T-cell (primary cell): ENCODE measurements at regions of chr3 and their contacts with region 1.

Region 1: DNA sequence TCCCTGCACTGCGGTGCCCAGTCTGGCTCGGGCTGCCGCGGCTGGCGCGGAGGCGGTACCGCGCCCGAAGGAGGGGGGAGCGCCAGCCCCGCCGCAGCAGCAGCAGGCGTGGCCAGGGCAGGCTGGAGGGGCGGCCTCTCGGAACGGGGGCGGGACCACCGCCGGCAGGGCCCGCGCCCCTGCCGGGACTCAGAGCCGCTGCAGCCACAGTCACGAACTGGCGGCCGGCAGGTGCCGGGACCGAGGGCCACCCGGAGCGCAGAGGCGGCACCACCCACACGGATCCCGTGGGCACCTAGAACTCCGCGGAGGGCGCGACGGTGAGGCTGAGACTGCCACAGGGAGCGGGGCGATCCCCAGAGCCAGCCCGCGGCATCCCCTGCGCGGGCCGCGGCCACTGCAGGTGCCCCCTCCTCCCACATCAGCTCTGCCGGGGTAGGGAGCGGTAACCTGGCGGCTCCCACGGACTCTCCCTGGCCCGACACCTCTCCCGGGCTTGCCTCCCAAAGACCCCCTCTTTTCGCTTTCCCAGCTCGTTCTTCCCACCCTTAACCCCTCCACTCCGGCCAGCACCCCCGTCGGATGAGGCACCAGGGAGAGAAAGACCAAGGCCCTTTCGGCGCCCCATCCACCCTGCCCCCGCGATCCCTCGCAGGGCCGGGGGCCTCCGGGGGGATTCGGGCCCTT is at the start of gene VWA5B2:
- DNase-seq: peak; percentile 36 to 85 (median 67)
- ATAC-seq: peak; percentile 96 to 98 (median 97)
- H3K4me3 ChIP-seq: peak within 1 kb of the TSS; percentile 50 to 77
- H3K4me3 Mint-ChIP-seq: peak within 1 kb of the TSS; percentile 62 to 82 (median 73)
- H3K27ac ChIP-seq: no peak within 1 kb of the TSS
- H3K27ac Mint-ChIP-seq: no peak within 1 kb of the TSS
- H3K4me1 ChIP-seq: peaks cover 4 to 23% of the 10 kb centered on the region in 2 experiments
- H3K4me1 Mint-ChIP-seq: peaks cover 15 to 17% (median 15%) of the 10 kb centered on the region in 3 donors
- H3K27me3 ChIP-seq: peaks cover 10 to 75% of the 10 kb centered on the region in 2 experiments
- H3K27me3 Mint-ChIP-seq: peaks cover 43 to 50% of the 10 kb centered on the region in 2 donors
- total RNA-seq, gene VWA5B2: 0.10 to 0.23 (median 0.16) TPM in 3 of 5 donors, not detected in the others

Region 2: DNA sequence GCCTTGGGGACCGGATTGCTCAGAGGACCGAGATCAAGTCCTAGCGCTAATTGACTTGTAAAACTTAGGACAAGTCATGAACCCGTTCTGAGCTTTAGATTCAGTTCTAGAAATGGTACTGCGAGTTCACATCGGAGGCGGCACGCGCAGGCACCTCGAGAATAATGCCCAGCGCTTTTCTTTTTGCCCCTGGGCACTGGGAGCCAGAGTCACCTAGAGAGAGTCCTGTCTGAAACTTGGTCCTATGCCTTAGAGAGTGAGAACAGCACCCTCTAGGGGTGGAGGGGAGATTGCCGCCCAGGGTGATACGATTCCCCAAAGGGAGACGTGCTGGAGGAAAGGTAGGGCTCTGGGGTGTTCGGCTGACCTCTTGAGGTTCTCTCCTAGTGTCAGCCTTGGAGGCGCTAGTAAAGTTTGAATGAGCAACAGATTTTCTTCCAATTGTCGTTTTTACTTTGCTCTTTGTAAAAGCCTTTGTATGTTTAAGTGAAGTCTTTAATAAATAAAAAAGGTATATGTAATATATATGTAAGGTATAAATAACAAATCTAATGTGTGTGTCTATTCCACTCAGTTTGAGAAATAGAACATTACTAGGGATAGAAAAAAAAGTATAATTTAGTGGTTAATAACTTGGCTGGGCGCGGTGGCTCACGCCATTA is 20.8 kb after region 1 on chr3:
- CTCF ChIA-PET with region 1: interaction called, 14 read pairs
- POLR2A ChIA-PET with region 1: no interaction called
- DNase-seq: peak; percentile 63 to 93 (median 82)
- ATAC-seq: peak; percentile 64 to 66 (median 66)
- H3K4me3 ChIP-seq: peak overlapping the region; percentile 69 to 99
- H3K4me3 Mint-ChIP-seq: peak overlapping the region; percentile 93 to 99 (median 95)
- H3K27ac ChIP-seq: peak overlapping the region; percentile 16
- H3K27ac Mint-ChIP-seq: peak overlapping the region; percentile 67 to 97
- H3K4me1 ChIP-seq: peaks cover 12 to 27% of the 10 kb centered on the region in 2 experiments
- H3K4me1 Mint-ChIP-seq: peaks cover 9 to 18% (median 15%) of the 10 kb centered on the region in 3 donors
- H3K27me3 ChIP-seq: no peaks in the 10 kb centered on the region
- H3K27me3 Mint-ChIP-seq: no peaks in the 10 kb centered on the region

Region 3: GRCh38 chr3:184261270-184261853 is 31.8 kb after region 1 on chr3 and contains the start of gene CAMK2N2:
- CTCF ChIA-PET with region 1: interaction called in 1 of 2 experiments, 20 read pairs
- POLR2A ChIA-PET with region 1: no interaction called
- DNase-seq: peak in 19 of 35 experiments; percentile 18 to 68 (median 30)
- ATAC-seq: peak; percentile 46 to 67 (median 61)
- H3K4me3 ChIP-seq: peak within 1 kb of the TSS; percentile 49 to 71
- H3K4me3 Mint-ChIP-seq: peak within 1 kb of the TSS; percentile 76 to 84 (median 84)
- H3K27ac ChIP-seq: no peak within 1 kb of the TSS
- H3K27ac Mint-ChIP-seq: peak within 1 kb of the TSS; percentile 36 to 52
- H3K4me1 ChIP-seq: peaks cover 19 to 31% of the 10 kb centered on the region in 2 experiments
- H3K4me1 Mint-ChIP-seq: peaks cover 18 to 28% (median 25%) of the 10 kb centered on the region in 3 donors
- H3K27me3 ChIP-seq: peaks cover 5 to 67% of the 10 kb centered on the region in 2 experiments
- H3K27me3 Mint-ChIP-seq: peaks cover 20 to 37% of the 10 kb centered on the region in 2 donors
- total RNA-seq, gene CAMK2N2: 0.19 TPM in 1 of 5 donors, not detected in the others

Region 4: DNA sequence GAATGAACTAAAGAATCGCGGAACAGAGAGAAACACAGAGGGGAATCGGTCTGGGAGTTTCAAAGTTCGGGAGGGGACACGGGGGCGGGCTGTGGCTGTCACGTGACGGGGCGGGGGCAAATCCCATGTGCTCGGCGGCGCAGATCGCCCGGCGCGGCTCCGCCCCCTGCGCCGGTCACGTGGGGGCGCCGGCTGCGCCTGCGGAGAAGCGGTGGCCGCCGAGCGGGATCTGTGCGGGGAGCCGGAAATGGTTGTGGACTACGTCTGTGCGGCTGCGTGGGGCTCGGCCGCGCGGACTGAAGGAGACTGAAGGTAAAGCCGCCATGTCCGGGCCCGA is 84.8 kb after region 1 on chr3 and contains the start of gene EIF4G1:
- CTCF ChIA-PET with region 1: no interaction called
- POLR2A ChIA-PET with region 1: no interaction called
- DNase-seq: peak; percentile 80 to 97 (median 91)
- ATAC-seq: peak; percentile 87 to 89 (median 88)
- H3K4me3 ChIP-seq: peak within 1 kb of the TSS; percentile 55 to 74
- H3K4me3 Mint-ChIP-seq: peak within 1 kb of the TSS; percentile 78 to 85 (median 79)
- H3K27ac ChIP-seq: peak within 1 kb of the TSS; percentile 94
- H3K27ac Mint-ChIP-seq: peak within 1 kb of the TSS; percentile 88 to 95
- H3K4me1 ChIP-seq: peaks cover 2 to 32% of the 10 kb centered on the region in 2 experiments
- H3K4me1 Mint-ChIP-seq: peaks cover 29 to 32% (median 31%) of the 10 kb centered on the region in 3 donors
- H3K27me3 ChIP-seq: no peaks in the 10 kb centered on the region
- H3K27me3 Mint-ChIP-seq: no peaks in the 10 kb centered on the region
- total RNA-seq, gene EIF4G1: 232 to 290 (median 271) TPM